ENCODE measurements at regions of chr12 and their contacts with region 1.

Region 1: GRCh38 chr12:67649570-67650387 is 1.2 kb downstream of the DYRK2 start:
- DNase-seq: peak; percentile 68
- ATAC-seq: peak; percentile 63

Region 2: GRCh38 chr12:67426067-67426466 is 223.7 kb before region 1 on chr12:
- intact Hi-C with region 1: no loop called
- DNase-seq: no peak
- ATAC-seq: peak; percentile 9

Region 3: DNA sequence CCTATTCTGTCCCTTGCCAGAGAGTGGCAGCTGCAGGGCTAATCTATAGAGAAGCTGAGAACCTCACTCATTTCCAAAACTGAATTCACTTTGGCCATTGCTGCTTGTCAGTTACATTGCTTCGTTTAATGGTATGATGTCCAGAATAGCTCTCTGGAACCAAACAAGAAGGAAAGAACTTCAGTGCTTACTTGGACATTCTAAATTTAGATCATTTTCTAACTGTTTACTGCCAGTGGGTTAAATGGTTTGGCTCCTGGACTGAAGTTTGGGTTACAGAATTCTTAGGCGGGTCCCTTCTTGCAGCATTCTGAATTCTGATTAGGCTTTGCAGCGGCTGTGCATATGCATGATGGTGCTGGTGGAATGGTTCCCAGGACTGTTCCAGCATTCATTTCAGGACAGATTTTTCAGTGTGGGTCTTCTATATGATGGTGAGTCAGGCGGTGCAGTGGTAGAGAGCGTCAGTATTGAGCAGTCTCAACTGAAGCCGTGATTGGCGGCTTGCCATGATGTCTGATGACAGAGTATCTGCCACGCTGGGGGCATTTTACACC is 147.5 kb after region 1 on chr12:
- intact Hi-C with region 1: loop called (anchors 10 kb)
- DNase-seq: peak; percentile 41
- ATAC-seq: peak; percentile 86

Measured in left ventricle myocardium superior (tissue), 1 donor.